Natural killer cell (primary cell): ENCODE measurements at regions of chr2 and their contacts with region 1.

Region 1: GRCh38 chr2:189661148-189661956 is at the start of gene ASNSD1:
- DNase-seq: peak; percentile 98 to 100
- ATAC-seq: peak; percentile 90 to 98 (median 93)
- H3K4me3 ChIP-seq: peak within 1 kb of the TSS; percentile 74
- H3K4me3 Mint-ChIP-seq: no peak within 1 kb of the TSS
- H3K27ac ChIP-seq: peak within 1 kb of the TSS; percentile 84
- H3K27ac Mint-ChIP-seq: no peak within 1 kb of the TSS
- H3K4me1 ChIP-seq: peaks cover 31% of the 10 kb centered on the region
- H3K4me1 Mint-ChIP-seq: peaks cover 25 to 31% of the 10 kb centered on the region in 2 donors
- H3K27me3 ChIP-seq: no peaks in the 10 kb centered on the region
- H3K27me3 Mint-ChIP-seq: no peaks in the 10 kb centered on the region
- CTCF ChIP-seq: peak; percentile 94
- total RNA-seq, gene ASNSD1: 17.5 to 30.4 (median 30.3) TPM

Region 2: GRCh38 chr2:189674374-189675112 is 13.2 kb after region 1 on chr2 and contains the start of gene ANKAR:
- intact Hi-C with region 1: loop called (anchors 1 kb)
- DNase-seq: peak; percentile 80 to 90
- ATAC-seq: peak; percentile 93 to 98 (median 94)
- H3K4me3 ChIP-seq: peak within 1 kb of the TSS; percentile 87
- H3K4me3 Mint-ChIP-seq: peak within 1 kb of the TSS; percentile 89
- H3K27ac ChIP-seq: peak within 1 kb of the TSS; percentile 99
- H3K27ac Mint-ChIP-seq: peak within 1 kb of the TSS; percentile 92 to 93
- H3K4me1 ChIP-seq: peaks cover 20% of the 10 kb centered on the region
- H3K4me1 Mint-ChIP-seq: peaks cover 40 to 42% of the 10 kb centered on the region in 2 donors
- H3K27me3 ChIP-seq: no peaks in the 10 kb centered on the region
- H3K27me3 Mint-ChIP-seq: no peaks in the 10 kb centered on the region
- CTCF ChIP-seq: peak; percentile 73
- total RNA-seq, gene ANKAR: 12.9 to 18.0 (median 17.4) TPM

Region 3: GRCh38 chr2:189685540-189686229 is 24.3 kb after region 1 on chr2:
- intact Hi-C with region 1: no loop called
- DNase-seq: peak in 1 of 2 donors; percentile 36
- ATAC-seq: peak in 1 of 3 donors; percentile 48
- H3K4me3 ChIP-seq: no peak overlapping the region
- H3K4me3 Mint-ChIP-seq: no peak overlapping the region
- H3K27ac ChIP-seq: no peak overlapping the region
- H3K27ac Mint-ChIP-seq: peak overlapping the region in 1 of 2 donors; percentile 33
- H3K4me1 ChIP-seq: peaks cover 5% of the 10 kb centered on the region
- H3K4me1 Mint-ChIP-seq: peaks cover 11% of the 10 kb centered on the region in 2 donors
- H3K27me3 ChIP-seq: no peaks in the 10 kb centered on the region
- H3K27me3 Mint-ChIP-seq: no peaks in the 10 kb centered on the region
- CTCF ChIP-seq: no peak

Region 4: DNA sequence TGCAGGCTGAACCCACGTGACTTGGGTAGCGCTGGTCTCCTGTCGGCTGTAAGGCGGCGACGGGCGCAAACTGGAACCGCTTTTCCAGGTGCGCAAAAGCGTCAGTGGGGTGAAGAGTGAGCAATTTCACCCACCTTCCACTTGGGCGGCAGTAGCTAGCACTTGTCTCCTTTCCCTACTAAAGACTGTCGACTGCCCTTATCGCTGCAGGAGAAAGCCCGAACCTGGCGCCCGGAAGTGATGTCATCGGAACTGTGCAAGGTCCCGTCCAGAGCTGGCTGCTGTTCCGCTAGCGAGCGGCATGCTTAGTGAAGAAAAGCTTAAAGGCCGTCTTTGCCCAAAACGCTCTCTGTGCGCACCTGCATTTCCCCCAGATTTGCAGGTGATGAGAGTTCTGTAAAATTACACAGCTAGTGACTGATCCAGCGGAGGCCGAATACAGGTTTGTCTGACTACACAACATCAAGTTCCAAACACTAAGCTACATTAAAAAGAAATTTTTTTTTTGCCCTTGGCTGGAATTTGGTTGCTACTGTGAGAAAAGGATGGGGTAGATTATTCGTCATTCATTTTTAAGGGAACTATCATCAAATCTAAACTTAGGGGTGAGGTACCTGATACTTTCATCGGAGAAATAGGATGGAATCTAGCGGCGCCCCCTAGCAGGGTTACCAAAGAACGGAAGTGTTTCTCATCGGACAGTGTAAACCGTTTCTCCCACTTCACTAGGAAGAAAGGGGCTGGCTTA is 101.4 kb after region 1 on chr2 and contains the start of gene OSGEPL1:
- intact Hi-C with region 1: loop called (anchors 1 kb)
- DNase-seq: peak; percentile 85 to 96
- ATAC-seq: peak; percentile 91 to 95 (median 93)
- H3K4me3 ChIP-seq: peak within 1 kb of the TSS; percentile 70
- H3K4me3 Mint-ChIP-seq: peak within 1 kb of the TSS; percentile 99
- H3K27ac ChIP-seq: peak within 1 kb of the TSS; percentile 86
- H3K27ac Mint-ChIP-seq: peak within 1 kb of the TSS; percentile 95 to 98
- H3K4me1 ChIP-seq: no peaks in the 10 kb centered on the region
- H3K4me1 Mint-ChIP-seq: peaks cover 6 to 7% of the 10 kb centered on the region in 2 donors
- H3K27me3 ChIP-seq: no peaks in the 10 kb centered on the region
- H3K27me3 Mint-ChIP-seq: no peaks in the 10 kb centered on the region
- CTCF ChIP-seq: peak; percentile 60
- total RNA-seq, gene OSGEPL1: 5.6 to 10.2 (median 8.5) TPM

Region 5: DNA sequence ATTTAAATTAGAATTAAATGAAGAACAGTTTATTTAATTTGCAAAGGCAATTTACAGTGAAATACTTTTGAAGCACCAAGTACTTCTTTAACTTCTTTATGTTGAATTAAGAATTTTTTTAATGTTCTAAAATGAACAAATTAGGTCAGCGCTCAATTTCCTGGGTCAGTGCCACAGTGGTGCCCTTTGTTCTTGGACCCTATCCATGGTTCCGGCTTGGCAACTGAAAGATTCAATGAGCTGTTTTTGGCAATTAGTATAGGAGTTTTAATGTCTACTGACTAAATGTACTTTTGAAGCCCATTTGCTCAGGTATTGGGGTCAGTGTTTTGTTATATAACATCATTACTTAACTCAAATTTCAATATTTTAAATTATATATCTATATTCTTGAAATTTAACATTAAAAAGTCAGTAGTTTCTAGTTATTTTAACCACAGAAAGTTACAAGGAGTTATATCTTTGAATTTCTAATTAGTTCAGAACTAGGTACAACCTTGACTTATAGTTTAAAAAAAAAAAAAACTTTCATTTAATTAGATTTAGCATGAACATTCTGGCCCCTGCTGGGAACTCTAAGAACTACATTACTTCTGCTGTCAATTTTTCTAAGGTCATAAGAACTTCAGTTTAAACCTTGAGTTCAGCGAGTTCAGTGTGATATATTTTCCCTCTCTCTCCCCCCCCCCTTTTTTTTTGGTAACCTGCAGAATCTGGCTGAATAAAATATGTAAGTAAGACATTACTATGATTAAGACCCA is 408.8 kb after region 1 on chr2:
- intact Hi-C with region 1: loop called (anchors 2 kb)
- DNase-seq: peak in 1 of 2 donors; percentile 64
- ATAC-seq: peak in 2 of 3 donors; percentile 53 to 63
- H3K4me3 ChIP-seq: no peak overlapping the region
- H3K4me3 Mint-ChIP-seq: no peak overlapping the region
- H3K27ac ChIP-seq: no peak overlapping the region
- H3K27ac Mint-ChIP-seq: no peak overlapping the region
- H3K4me1 ChIP-seq: no peaks in the 10 kb centered on the region
- H3K4me1 Mint-ChIP-seq: no peaks in the 10 kb centered on the region
- H3K27me3 ChIP-seq: no peaks in the 10 kb centered on the region
- H3K27me3 Mint-ChIP-seq: peaks cover 0 to 3% of the 10 kb centered on the region in 2 donors
- CTCF ChIP-seq: peak; percentile 47

Region 6: DNA sequence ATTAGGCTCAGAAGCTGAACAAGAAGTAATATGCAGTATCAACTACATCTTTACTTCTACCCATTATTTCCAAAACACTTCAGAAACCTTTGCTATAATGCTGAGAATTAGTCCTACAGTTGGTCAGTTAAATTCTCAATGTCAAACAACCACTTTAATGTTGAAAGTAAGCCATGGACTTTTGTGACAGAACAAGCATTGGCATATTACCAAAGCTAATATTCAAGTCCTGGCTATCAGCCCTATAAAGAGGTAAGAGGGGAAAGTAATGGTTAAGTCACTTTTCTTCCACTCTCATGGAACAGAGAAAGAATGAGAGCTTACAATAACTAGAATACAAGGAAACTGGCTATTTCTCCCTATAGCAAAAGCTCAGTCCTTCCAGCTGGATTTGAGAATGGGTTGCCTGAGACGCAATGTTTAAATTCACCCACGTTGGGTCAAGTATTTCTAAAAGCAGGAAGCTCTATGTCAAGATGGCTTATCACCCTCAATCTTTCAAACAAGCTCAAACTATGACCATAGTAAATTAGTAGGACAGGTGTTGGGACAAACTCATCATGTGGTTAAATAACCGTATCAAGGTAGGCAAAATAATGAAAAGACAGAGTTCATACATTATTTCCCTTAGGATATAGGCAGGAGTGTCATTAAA is 715.4 kb after region 1 on chr2:
- intact Hi-C with region 1: loop called (anchors 2 kb)
- DNase-seq: no peak
- ATAC-seq: no peak
- H3K4me3 ChIP-seq: no peak overlapping the region
- H3K4me3 Mint-ChIP-seq: no peak overlapping the region
- H3K27ac ChIP-seq: no peak overlapping the region
- H3K27ac Mint-ChIP-seq: no peak overlapping the region
- H3K4me1 ChIP-seq: no peaks in the 10 kb centered on the region
- H3K4me1 Mint-ChIP-seq: peaks cover 0 to 3% of the 10 kb centered on the region in 2 donors
- H3K27me3 ChIP-seq: no peaks in the 10 kb centered on the region
- H3K27me3 Mint-ChIP-seq: no peaks in the 10 kb centered on the region
- CTCF ChIP-seq: no peak

Region 7: DNA sequence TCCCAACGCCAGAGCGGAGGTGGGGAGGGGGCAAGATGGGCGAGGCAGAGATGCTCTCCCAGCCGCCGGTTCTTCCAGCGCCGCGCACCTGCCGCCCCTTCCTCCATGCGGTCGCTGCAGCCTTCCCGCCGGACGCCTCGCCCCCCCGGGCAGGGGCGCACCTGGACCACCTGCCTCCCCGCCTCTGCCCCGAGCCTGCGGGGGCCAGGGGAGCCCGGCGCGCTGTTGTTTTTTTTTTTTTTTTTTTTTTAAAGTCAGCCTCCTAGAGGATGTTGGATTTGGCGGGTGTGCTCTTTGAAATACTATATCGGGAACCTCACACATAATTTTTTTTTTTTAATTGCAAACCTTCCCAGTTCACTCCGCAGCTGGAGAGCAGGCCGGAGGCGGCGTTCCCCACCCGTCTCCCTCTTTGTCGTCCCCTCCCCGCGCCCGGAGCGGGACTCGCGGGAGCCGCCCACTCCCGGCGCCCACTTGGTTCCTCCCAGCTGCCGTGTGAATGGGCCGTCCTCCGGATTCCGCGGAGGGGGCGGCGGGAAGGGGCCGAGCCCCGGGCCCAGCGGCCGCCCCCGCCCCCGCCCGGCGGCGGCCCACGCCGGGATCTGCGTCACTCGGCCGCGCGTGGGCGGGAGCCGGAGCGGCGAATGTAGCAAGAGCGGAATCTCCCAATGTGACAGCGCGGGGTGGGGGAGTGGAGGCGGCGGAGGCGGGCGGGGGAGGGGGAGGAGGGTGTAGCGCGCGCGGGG is 987.1 kb after region 1 on chr2:
- intact Hi-C with region 1: loop called (anchors 2 kb)
- DNase-seq: peak; percentile 90 to 97
- ATAC-seq: peak; percentile 77 to 93 (median 83)
- H3K4me3 ChIP-seq: peak overlapping the region; percentile 91
- H3K4me3 Mint-ChIP-seq: peak overlapping the region; percentile 95
- H3K27ac ChIP-seq: peak overlapping the region; percentile 82
- H3K27ac Mint-ChIP-seq: peak overlapping the region; percentile 86 to 90
- H3K4me1 ChIP-seq: peaks cover 14% of the 10 kb centered on the region
- H3K4me1 Mint-ChIP-seq: peaks cover 19 to 27% of the 10 kb centered on the region in 2 donors
- H3K27me3 ChIP-seq: no peaks in the 10 kb centered on the region
- H3K27me3 Mint-ChIP-seq: no peaks in the 10 kb centered on the region
- CTCF ChIP-seq: no peak